ENCODE measurements at regions of chr6 and their contacts with region 1.

Region 1: GRCh38 chr6:10676403-10676802 is 18.0 kb downstream of the C6orf52 start:
- DNase-seq: no peak
- H3K4me3 ChIP-seq: no peak overlapping the region
- H3K27ac ChIP-seq: no peak overlapping the region
- H3K4me1 ChIP-seq: no peaks in the 10 kb centered on the region
- H3K27me3 ChIP-seq: no peaks in the 10 kb centered on the region
- CTCF ChIP-seq: no peak

Region 2: DNA sequence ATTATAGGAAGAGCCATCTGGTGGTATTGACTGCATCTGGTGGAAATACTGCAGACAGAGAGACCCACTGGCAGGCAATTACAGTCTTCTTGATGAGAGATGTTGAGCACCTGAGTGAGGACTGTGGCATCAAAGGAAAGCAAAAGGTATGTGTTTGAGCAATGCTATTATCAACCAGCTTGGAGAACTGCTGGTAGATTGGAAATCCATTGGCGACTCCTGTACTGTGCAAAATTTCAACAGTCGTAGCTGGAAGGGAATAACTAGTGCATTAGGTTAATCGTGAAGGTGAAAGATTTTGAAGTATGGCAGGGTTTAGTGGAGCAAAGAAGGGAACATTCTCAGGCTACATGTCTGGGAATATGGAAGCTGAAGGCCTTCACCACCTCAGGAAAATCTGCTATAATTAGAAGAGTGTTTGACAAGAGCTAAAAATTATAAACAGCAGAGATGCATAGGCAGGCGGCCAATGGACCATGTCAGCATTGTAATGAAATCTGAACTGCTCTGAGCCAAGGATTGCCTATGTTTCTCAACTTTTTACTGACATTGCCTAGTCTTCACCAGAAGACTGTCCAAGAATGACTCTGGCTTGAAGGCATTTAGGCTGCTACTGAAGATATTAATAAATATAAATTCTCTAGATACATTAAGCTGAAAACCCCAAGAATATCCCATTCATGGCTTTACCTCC is 66.3 kb before region 1 on chr6:
- CTCF ChIA-PET with region 1: no interaction called
- dilution Hi-C with region 1: loop called (anchors 5 kb)
- in situ Hi-C with region 1: no loop called
- intact Hi-C with region 1: no loop called
- DNase-seq: no peak
- H3K4me3 ChIP-seq: no peak overlapping the region
- H3K27ac ChIP-seq: no peak overlapping the region
- H3K4me1 ChIP-seq: no peaks in the 10 kb centered on the region
- H3K27me3 ChIP-seq: no peaks in the 10 kb centered on the region
- CTCF ChIP-seq: no peak